ENCODE measurements at regions of chr1 and their contacts with region 1.

Region 1: DNA sequence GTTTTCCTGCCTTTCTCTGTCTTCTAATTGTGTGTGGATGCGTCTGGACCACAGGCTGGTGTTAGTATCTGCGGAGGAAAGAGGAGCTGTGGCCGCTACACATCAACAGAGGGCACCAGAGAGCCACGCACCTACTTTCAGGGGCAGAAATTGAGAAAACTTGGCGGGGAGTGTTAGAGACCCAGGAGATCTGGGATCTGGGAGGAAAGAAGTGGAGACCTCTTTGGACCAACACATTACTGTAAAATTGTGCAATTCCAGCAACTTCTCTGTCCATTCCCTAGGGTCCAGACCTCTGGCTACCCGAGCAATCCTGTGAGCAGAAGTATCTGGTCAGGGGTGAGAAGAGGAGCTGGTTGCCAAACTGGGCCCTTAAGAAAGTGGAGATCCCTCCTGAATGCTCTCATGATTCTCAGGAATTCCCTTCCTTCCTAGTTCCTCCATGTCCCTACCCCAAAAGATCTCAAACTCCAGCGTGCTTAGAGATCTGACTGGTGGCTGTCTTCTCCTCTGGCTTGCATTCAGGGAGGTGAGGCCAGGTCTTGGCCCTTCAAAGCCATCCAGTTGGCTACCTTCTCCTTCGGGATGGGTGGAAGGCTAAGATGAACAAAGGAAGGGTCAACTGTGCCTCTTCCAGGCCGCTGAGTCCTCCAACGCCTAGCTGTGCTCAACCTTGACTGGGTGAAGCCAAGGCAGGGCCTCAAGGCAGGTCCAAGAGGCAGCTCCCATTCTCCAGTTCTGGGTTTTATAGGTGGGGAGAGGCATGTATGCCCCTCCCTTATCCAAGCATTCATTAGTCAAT is 1.2 kb upstream of the KIRREL1 start:
- DNase-seq: peak; percentile 77
- ATAC-seq: peak; percentile 45
- H3K4me3 Mint-ChIP-seq: peak overlapping the region; percentile 90
- H3K27ac Mint-ChIP-seq: no peak overlapping the region
- H3K4me1 Mint-ChIP-seq: peaks cover 38% of the 10 kb centered on the region
- H3K27me3 Mint-ChIP-seq: peaks cover 5% of the 10 kb centered on the region; the same call in 1 of the 2 replicates
- CTCF ChIP-seq: peak; percentile 81

Region 2: GRCh38 chr1:157758018-157758417 is 234.2 kb before region 1 on chr1:
- CTCF ChIA-PET with region 1: no interaction called
- POLR2A ChIA-PET with region 1: no interaction called
- DNase-seq: no peak
- ATAC-seq: no peak
- H3K4me3 Mint-ChIP-seq: no peak overlapping the region
- H3K27ac Mint-ChIP-seq: no peak overlapping the region
- H3K4me1 Mint-ChIP-seq: peaks cover 11% of the 10 kb centered on the region
- H3K27me3 Mint-ChIP-seq: no peaks in the 10 kb centered on the region
- CTCF ChIP-seq: no peak

Region 3: GRCh38 chr1:157773493-157774350 is 218.5 kb before region 1 on chr1:
- CTCF ChIA-PET with region 1: no interaction called
- POLR2A ChIA-PET with region 1: no interaction called
- DNase-seq: peak; percentile 53
- ATAC-seq: peak; percentile 99
- H3K4me3 Mint-ChIP-seq: no peak overlapping the region
- H3K27ac Mint-ChIP-seq: no peak overlapping the region
- H3K4me1 Mint-ChIP-seq: peaks cover 5% of the 10 kb centered on the region
- H3K27me3 Mint-ChIP-seq: no peaks in the 10 kb centered on the region
- CTCF ChIP-seq: peak; percentile 31

Region 4: DNA sequence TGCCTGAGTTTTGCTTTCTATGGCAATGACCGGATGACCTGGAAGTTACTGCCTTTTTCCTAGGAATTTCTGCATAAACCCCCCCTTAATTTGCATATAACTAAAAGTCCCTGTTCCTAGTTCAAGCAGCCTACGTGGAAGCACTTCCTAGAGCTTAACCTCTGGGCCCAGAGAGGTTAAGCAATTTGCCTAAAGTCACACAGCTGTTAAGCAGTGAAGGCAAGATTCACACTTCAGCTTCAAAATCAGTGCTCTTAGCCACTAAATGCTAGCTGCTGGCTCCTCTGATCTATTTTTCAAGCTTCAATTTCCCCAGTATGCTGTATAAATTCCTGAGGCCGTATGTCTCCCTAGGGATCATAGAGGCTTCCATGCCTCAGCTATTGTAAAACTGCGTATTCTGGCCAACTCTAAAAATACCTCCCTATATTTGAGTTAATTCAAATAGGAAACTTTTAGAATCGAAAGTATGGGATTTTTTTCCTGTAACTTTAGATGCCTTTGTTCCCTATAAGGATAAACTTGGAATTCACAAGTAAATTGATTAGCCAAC is 97.5 kb before region 1 on chr1:
- CTCF ChIA-PET with region 1: no interaction called
- POLR2A ChIA-PET with region 1: no interaction called
- DNase-seq: no peak
- ATAC-seq: no peak
- H3K4me3 Mint-ChIP-seq: no peak overlapping the region
- H3K27ac Mint-ChIP-seq: no peak overlapping the region
- H3K4me1 Mint-ChIP-seq: no peaks in the 10 kb centered on the region
- H3K27me3 Mint-ChIP-seq: peaks cover 11% of the 10 kb centered on the region
- CTCF ChIP-seq: no peak

Region 5: GRCh38 chr1:157937744-157938143 is 54.5 kb before region 1 on chr1:
- CTCF ChIA-PET with region 1: no interaction called
- POLR2A ChIA-PET with region 1: no interaction called
- DNase-seq: no peak
- ATAC-seq: no peak
- H3K4me3 Mint-ChIP-seq: no peak overlapping the region
- H3K27ac Mint-ChIP-seq: no peak overlapping the region
- H3K4me1 Mint-ChIP-seq: no peaks in the 10 kb centered on the region
- H3K27me3 Mint-ChIP-seq: peaks cover 6% of the 10 kb centered on the region
- CTCF ChIP-seq: no peak

Region 6: GRCh38 chr1:157963713-157964112 is 28.5 kb before region 1 on chr1:
- CTCF ChIA-PET with region 1: interaction called, 31 read pairs
- POLR2A ChIA-PET with region 1: no interaction called
- DNase-seq: peak; percentile 79
- ATAC-seq: peak; percentile 90
- H3K4me3 Mint-ChIP-seq: no peak overlapping the region
- H3K27ac Mint-ChIP-seq: no peak overlapping the region
- H3K4me1 Mint-ChIP-seq: peaks cover 14% of the 10 kb centered on the region
- H3K27me3 Mint-ChIP-seq: peaks cover 3% of the 10 kb centered on the region; the same call in 1 of the 2 replicates
- CTCF ChIP-seq: peak; percentile 89

Region 7: GRCh38 chr1:157978586-157979403 is 13.4 kb before region 1 on chr1:
- CTCF ChIA-PET with region 1: interaction called, 49 read pairs
- POLR2A ChIA-PET with region 1: interaction called, 7 read pairs
- DNase-seq: peak; percentile 78
- ATAC-seq: peak; percentile 89
- H3K4me3 Mint-ChIP-seq: peak overlapping the region; percentile 49
- H3K27ac Mint-ChIP-seq: peak overlapping the region; percentile 31; the same call in 1 of the 2 replicates
- H3K4me1 Mint-ChIP-seq: peaks cover 60% of the 10 kb centered on the region
- H3K27me3 Mint-ChIP-seq: no peaks in the 10 kb centered on the region; the same call in 1 of the 2 replicates
- CTCF ChIP-seq: no peak

Region 8: DNA sequence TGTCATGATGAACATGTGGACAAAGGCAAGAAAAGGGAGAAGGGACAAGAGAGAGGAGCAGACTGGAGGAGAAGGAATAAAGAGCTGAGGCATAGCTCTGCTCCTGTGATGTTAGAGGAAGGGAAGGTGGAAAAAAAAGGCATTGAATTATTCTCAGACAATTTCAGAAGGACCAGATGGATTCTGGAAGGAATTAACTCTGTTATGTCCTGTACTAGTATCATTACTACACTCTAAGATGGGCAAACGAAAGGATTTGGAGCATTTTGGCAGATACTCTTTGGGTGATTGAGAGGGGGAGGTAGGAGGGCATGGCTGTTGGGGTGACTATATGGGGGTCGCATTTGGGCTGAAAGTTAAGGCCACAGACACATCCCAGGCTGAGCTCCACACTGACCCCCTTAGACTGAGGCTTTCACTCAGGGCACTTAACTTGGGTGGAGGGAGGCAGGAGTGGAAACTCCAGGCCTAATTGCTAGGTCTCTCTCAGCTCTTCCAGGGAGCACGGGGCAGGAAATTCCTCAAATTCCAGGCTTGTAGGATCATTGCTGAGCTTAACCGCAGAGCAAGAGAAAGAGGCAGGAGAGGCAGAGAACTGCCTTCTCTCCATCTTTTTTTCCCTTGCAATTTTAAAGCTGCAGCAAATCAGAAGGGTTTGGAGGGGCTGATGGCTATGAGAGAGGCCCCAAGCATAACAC is 27.1 kb after region 1 on chr1:
- CTCF ChIA-PET with region 1: interaction called, 174 read pairs
- POLR2A ChIA-PET with region 1: interaction called, 8 read pairs
- DNase-seq: peak; percentile 64
- ATAC-seq: peak; percentile 87
- H3K4me3 Mint-ChIP-seq: peak overlapping the region; percentile 37
- H3K27ac Mint-ChIP-seq: peak overlapping the region; percentile 91
- H3K4me1 Mint-ChIP-seq: peaks cover 95% of the 10 kb centered on the region
- H3K27me3 Mint-ChIP-seq: no peaks in the 10 kb centered on the region
- CTCF ChIP-seq: no peak

Region 9: GRCh38 chr1:158035976-158036583 is 43.8 kb after region 1 on chr1:
- CTCF ChIA-PET with region 1: interaction called, 70 read pairs
- POLR2A ChIA-PET with region 1: interaction called, 3 read pairs
- DNase-seq: no peak
- ATAC-seq: no peak
- H3K4me3 Mint-ChIP-seq: no peak overlapping the region
- H3K27ac Mint-ChIP-seq: no peak overlapping the region
- H3K4me1 Mint-ChIP-seq: peaks cover 47% of the 10 kb centered on the region
- H3K27me3 Mint-ChIP-seq: no peaks in the 10 kb centered on the region
- CTCF ChIP-seq: peak; percentile 79

Region 10: GRCh38 chr1:158087320-158087927 is 95.2 kb after region 1 on chr1:
- CTCF ChIA-PET with region 1: interaction called, 67 read pairs
- POLR2A ChIA-PET with region 1: no interaction called
- DNase-seq: peak; percentile 87
- ATAC-seq: peak; percentile 97
- H3K4me3 Mint-ChIP-seq: no peak overlapping the region
- H3K27ac Mint-ChIP-seq: peak overlapping the region; percentile 69
- H3K4me1 Mint-ChIP-seq: peaks cover 8% of the 10 kb centered on the region
- H3K27me3 Mint-ChIP-seq: no peaks in the 10 kb centered on the region
- CTCF ChIP-seq: peak; percentile 94

Region 11: GRCh38 chr1:158101927-158102326 is 109.7 kb after region 1 on chr1:
- CTCF ChIA-PET with region 1: interaction called, 52 read pairs
- POLR2A ChIA-PET with region 1: no interaction called
- DNase-seq: no peak
- ATAC-seq: no peak
- H3K4me3 Mint-ChIP-seq: no peak overlapping the region
- H3K27ac Mint-ChIP-seq: peak overlapping the region; percentile 96
- H3K4me1 Mint-ChIP-seq: peaks cover 94% of the 10 kb centered on the region
- H3K27me3 Mint-ChIP-seq: no peaks in the 10 kb centered on the region
- CTCF ChIP-seq: no peak